Activated CD4-positive, alpha-beta memory T cell treated with anti-CD3 and anti-CD28 coated beads for 36 hours (primary cell): ENCODE measurements at regions of chr5 and their contacts with region 1.

Region 1: GRCh38 chr5:176660860-176661641 is 13.8 kb downstream of the TSPAN17 start:
- DNase-seq: peak; percentile 85
- H3K4me3 Mint-ChIP-seq: no peak overlapping the region
- H3K27ac Mint-ChIP-seq: no peak overlapping the region
- H3K4me1 Mint-ChIP-seq: peaks cover 27% of the 10 kb centered on the region
- H3K27me3 Mint-ChIP-seq: peaks cover 8% of the 10 kb centered on the region

Region 2: GRCh38 chr5:176573564-176574296 is 87.3 kb before region 1 on chr5:
- CTCF ChIA-PET with region 1: interaction called, 25 read pairs
- POLR2A ChIA-PET with region 1: no interaction called
- intact Hi-C with region 1: no loop called
- DNase-seq: peak; percentile 84
- H3K4me3 Mint-ChIP-seq: no peak overlapping the region
- H3K27ac Mint-ChIP-seq: no peak overlapping the region
- H3K4me1 Mint-ChIP-seq: no peaks in the 10 kb centered on the region
- H3K27me3 Mint-ChIP-seq: peaks cover 2% of the 10 kb centered on the region

Region 3: DNA sequence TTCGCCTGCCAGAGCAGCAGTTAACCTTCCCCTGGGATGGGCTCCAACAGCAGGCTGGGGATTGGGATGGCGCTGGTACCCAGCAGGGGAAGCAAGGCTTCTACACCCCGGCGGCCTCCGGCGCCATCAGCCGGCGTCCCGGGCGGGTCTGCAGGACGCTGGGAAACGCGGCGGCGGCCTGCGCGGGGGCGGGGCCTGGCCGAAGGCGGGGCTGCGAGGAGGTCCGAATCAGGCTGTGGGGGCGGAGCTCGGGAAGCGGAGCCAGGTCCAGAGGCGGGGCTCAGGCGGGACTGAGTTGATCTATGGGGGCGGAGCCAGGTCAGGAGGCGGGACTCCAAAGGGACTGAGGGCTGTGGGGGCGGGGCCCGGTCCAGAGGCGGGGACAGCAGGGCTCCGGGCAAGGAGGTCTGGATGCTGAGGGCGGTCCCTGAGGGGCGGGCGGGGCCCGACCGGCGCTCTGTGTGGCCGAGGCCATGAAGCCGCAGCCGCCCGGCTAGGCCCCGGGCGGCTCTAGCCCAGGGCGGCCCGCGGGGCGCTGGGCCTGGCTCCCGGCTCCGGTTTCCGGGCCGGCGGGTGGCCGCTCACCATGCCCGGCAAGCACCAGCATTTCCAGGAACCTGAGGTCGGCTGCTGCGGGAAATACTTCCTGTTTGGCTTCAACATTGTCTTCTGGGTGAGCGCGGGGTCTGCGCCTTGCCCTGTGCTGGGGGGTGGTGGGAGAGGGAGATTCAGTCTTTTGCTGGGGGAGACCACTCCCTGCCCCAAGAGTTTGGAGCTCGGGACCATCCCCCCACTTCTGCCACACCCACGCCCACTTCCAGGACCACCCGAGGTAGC is 13.8 kb before region 1 on chr5 and contains the start of gene TSPAN17:
- CTCF ChIA-PET with region 1: interaction called, 65 read pairs
- POLR2A ChIA-PET with region 1: interaction called, 8 read pairs
- intact Hi-C with region 1: no loop called
- DNase-seq: peak; percentile 100
- H3K4me3 Mint-ChIP-seq: peak within 1 kb of the TSS; percentile 86
- H3K27ac Mint-ChIP-seq: peak within 1 kb of the TSS; percentile 85
- H3K4me1 Mint-ChIP-seq: peaks cover 48% of the 10 kb centered on the region
- H3K27me3 Mint-ChIP-seq: no peaks in the 10 kb centered on the region
- total RNA-seq, gene TSPAN17: 25.2 to 25.3 TPM

Region 4: GRCh38 chr5:176817841-176818377 is 156.9 kb after region 1 on chr5:
- CTCF ChIA-PET with region 1: interaction called, 12 read pairs
- POLR2A ChIA-PET with region 1: no interaction called
- intact Hi-C with region 1: loop called (anchors 5 kb)
- DNase-seq: peak; percentile 31
- H3K4me3 Mint-ChIP-seq: peak overlapping the region; percentile 33
- H3K27ac Mint-ChIP-seq: no peak overlapping the region
- H3K4me1 Mint-ChIP-seq: peaks cover 8% of the 10 kb centered on the region
- H3K27me3 Mint-ChIP-seq: peaks cover 63% of the 10 kb centered on the region

Region 5: DNA sequence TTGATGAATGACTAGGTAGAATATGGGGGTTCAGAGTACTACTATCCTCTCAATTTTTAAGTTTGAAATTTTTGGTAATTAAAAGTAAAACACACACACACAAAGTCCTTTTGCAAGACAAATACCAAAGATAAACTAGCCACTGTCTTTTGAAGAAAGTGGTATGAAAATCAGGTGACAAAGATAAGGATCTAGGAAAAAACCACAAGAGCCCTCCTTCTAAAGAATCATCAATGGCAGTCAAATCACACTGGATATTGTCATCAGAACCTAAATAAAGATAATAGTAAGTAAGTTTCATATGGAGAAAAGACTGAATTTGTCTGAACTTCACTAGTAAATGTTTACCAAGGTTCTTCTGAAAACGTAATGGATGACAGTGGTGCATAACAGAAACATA is 268.6 kb after region 1 on chr5:
- CTCF ChIA-PET with region 1: interaction called, 19 read pairs
- POLR2A ChIA-PET with region 1: no interaction called
- intact Hi-C with region 1: no loop called
- DNase-seq: no peak
- H3K4me3 Mint-ChIP-seq: no peak overlapping the region
- H3K27ac Mint-ChIP-seq: no peak overlapping the region
- H3K4me1 Mint-ChIP-seq: peaks cover 12% of the 10 kb centered on the region
- H3K27me3 Mint-ChIP-seq: no peaks in the 10 kb centered on the region

Region 6: DNA sequence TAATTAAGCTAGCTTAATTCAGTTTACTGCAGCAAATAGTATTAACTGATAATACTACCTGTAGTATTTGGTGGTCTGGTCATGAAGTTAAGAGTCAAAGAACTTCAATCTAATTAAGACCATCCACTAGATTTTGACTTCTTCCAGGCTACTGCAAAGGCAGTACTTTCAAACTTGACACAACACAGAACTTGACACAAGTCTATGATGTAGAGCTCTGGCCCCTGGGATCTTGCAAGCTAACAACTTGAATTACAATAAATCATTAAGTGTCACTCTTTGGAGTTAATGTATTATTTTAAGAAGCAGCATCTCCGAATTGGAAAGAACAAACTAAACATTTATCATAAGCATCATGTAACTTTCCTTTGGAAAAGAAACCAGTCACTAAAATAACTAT is 304.6 kb after region 1 on chr5:
- CTCF ChIA-PET with region 1: interaction called, 23 read pairs
- POLR2A ChIA-PET with region 1: no interaction called
- intact Hi-C with region 1: no loop called
- DNase-seq: no peak
- H3K4me3 Mint-ChIP-seq: no peak overlapping the region
- H3K27ac Mint-ChIP-seq: no peak overlapping the region
- H3K4me1 Mint-ChIP-seq: no peaks in the 10 kb centered on the region
- H3K27me3 Mint-ChIP-seq: no peaks in the 10 kb centered on the region